Testis (tissue), 5 donors: ENCODE measurements at regions of chr14 and their contacts with region 1.

Region 1: GRCh38 chr14:95442633-95443021 is 73.8 kb downstream of the SYNE3 start:
- DNase-seq: peak; percentile 92
- H3K4me3 ChIP-seq: no peak overlapping the region
- H3K27ac ChIP-seq: no peak overlapping the region
- H3K4me1 ChIP-seq: no peaks in the 10 kb centered on the region
- H3K27me3 ChIP-seq: no peaks in the 10 kb centered on the region
- CTCF ChIP-seq: peak; percentile 69 to 77 (median 71)
- POLR2A ChIP-seq: no peak

Region 2: GRCh38 chr14:94897082-94897481 is 545.5 kb before region 1 on chr14:
- intact Hi-C with region 1: no loop called
- DNase-seq: no peak
- H3K4me3 ChIP-seq: no peak overlapping the region
- H3K27ac ChIP-seq: no peak overlapping the region
- H3K4me1 ChIP-seq: no peaks in the 10 kb centered on the region
- H3K27me3 ChIP-seq: no peaks in the 10 kb centered on the region
- CTCF ChIP-seq: no peak
- POLR2A ChIP-seq: no peak

Region 3: DNA sequence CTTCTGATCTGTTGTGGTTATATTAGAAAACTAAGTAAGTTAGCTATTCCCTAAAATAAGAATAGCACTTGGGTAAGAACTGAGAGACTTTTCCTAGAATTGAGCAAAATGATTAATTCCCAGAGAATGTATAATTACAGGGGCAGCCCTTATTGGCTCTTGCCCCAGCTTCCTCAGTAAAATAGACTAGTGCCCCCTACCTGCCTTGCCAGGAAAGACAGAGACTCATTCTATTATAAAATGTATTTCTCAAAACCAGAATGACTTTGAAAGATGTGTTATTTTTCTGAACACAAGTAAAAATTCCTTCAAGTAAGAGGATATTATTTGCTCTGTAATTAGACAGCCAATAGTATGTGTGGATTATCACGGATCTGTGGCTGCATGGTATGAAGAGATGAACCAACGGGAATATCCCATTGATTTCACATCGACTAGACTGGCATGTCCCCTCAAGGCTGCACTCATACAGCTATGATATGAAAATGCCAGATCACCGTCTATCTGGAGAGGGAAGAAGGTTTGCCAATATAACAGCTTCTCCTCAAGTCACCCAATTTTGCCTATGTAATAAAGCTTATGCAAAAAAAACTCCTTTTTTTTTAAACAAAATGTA is 84.9 kb after region 1 on chr14:
- intact Hi-C with region 1: loop called (anchors 5 kb)
- DNase-seq: peak; percentile 82
- H3K4me3 ChIP-seq: no peak overlapping the region
- H3K27ac ChIP-seq: peak overlapping the region in 1 of 2 donors; percentile 66
- H3K4me1 ChIP-seq: peaks cover 49% of the 10 kb centered on the region
- H3K27me3 ChIP-seq: no peaks in the 10 kb centered on the region
- CTCF ChIP-seq: peak; percentile 80 to 89 (median 81)
- POLR2A ChIP-seq: no peak

Region 4: GRCh38 chr14:95609387-95609990 is 166.9 kb after region 1 on chr14:
- intact Hi-C with region 1: no loop called
- DNase-seq: peak; percentile 64
- H3K4me3 ChIP-seq: no peak overlapping the region
- H3K27ac ChIP-seq: no peak overlapping the region
- H3K4me1 ChIP-seq: no peaks in the 10 kb centered on the region
- H3K27me3 ChIP-seq: no peaks in the 10 kb centered on the region
- CTCF ChIP-seq: no peak
- POLR2A ChIP-seq: no peak